ENCODE measurements at regions of chr17 and their contacts with region 1.

Region 1: GRCh38 chr17:8079291-8080207 is 8.0 kb downstream of the ALOX12B start:
- DNase-seq: peak; percentile 95
- H3K4me3 ChIP-seq: peak overlapping the region; percentile 49 to 63
- H3K27ac ChIP-seq: peak overlapping the region in 1 of 2 experiments; percentile 58; a peak in 1 of 4 replicates
- H3K4me1 ChIP-seq: peaks cover 0 to 6% of the 10 kb centered on the region in 2 experiments; a peak in 1 of 4 replicates
- H3K27me3 ChIP-seq: peaks cover 33% of the 10 kb centered on the region
- CTCF ChIP-seq: peak; percentile 79
- EP300 ChIP-seq: no peak
- RAD21 ChIP-seq: peak; percentile 60

Region 2: DNA sequence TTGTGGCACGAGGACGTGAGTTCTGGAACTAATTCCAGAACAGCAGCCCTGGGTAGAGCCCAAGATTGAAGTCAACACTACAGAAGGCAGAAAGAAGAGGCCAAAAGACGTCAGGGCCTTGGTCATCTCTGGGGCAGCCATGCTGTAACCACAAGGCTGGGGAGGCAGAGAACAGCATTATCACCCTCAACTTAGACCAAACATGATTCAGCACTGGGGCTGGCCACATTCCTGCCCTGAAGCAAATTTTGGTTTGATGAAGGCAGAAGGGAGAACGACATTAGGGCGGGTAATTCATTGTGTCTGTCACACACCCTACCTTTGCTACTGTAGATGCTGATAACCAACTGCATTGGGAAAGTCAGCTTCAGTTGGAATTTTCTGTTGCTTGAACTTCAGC is 50.4 kb before region 1 on chr17:
- CTCF ChIA-PET with region 1: no interaction called
- POLR2A ChIA-PET with region 1: no interaction called
- DNase-seq: no peak
- H3K4me3 ChIP-seq: no peak overlapping the region
- H3K27ac ChIP-seq: no peak overlapping the region
- H3K4me1 ChIP-seq: no peaks in the 10 kb centered on the region
- H3K27me3 ChIP-seq: peaks cover 20% of the 10 kb centered on the region
- CTCF ChIP-seq: no peak
- EP300 ChIP-seq: no peak
- RAD21 ChIP-seq: no peak

Region 3: GRCh38 chr17:8063761-8064589 is 15.6 kb before region 1 on chr17:
- CTCF ChIA-PET with region 1: interaction called, 390 read pairs
- POLR2A ChIA-PET with region 1: no interaction called
- DNase-seq: no peak
- H3K4me3 ChIP-seq: no peak overlapping the region
- H3K27ac ChIP-seq: no peak overlapping the region
- H3K4me1 ChIP-seq: peaks cover 4 to 5% of the 10 kb centered on the region in 2 experiments; a peak in 1 of 4 replicates
- H3K27me3 ChIP-seq: peaks cover 79% of the 10 kb centered on the region
- CTCF ChIP-seq: no peak
- EP300 ChIP-seq: no peak
- RAD21 ChIP-seq: no peak

Region 4: GRCh38 chr17:8091033-8091687 is 11.6 kb after region 1 on chr17:
- CTCF ChIA-PET with region 1: interaction called, 158 read pairs
- POLR2A ChIA-PET with region 1: no interaction called
- DNase-seq: no peak
- H3K4me3 ChIP-seq: no peak overlapping the region
- H3K27ac ChIP-seq: no peak overlapping the region
- H3K4me1 ChIP-seq: no peaks in the 10 kb centered on the region
- H3K27me3 ChIP-seq: peaks cover 62% of the 10 kb centered on the region; the same call in 1 of the 2 replicates
- CTCF ChIP-seq: no peak
- EP300 ChIP-seq: no peak
- RAD21 ChIP-seq: no peak

Region 5: GRCh38 chr17:8109661-8110464 is 30.3 kb after region 1 on chr17:
- CTCF ChIA-PET with region 1: interaction called, 298 read pairs
- POLR2A ChIA-PET with region 1: no interaction called
- DNase-seq: peak; percentile 84
- H3K4me3 ChIP-seq: peak overlapping the region in 1 of 2 experiments; percentile 37; a peak in 1 of 4 replicates
- H3K27ac ChIP-seq: no peak overlapping the region
- H3K4me1 ChIP-seq: no peaks in the 10 kb centered on the region; a peak in 1 of 4 replicates
- H3K27me3 ChIP-seq: peaks cover 21% of the 10 kb centered on the region; the same call in 1 of the 2 replicates
- CTCF ChIP-seq: peak; percentile 68
- EP300 ChIP-seq: no peak
- RAD21 ChIP-seq: peak; percentile 52

Measured in SK-N-SH (cell line).